ENCODE measurements at regions of chr17 and their contacts with region 1.

Region 1: DNA sequence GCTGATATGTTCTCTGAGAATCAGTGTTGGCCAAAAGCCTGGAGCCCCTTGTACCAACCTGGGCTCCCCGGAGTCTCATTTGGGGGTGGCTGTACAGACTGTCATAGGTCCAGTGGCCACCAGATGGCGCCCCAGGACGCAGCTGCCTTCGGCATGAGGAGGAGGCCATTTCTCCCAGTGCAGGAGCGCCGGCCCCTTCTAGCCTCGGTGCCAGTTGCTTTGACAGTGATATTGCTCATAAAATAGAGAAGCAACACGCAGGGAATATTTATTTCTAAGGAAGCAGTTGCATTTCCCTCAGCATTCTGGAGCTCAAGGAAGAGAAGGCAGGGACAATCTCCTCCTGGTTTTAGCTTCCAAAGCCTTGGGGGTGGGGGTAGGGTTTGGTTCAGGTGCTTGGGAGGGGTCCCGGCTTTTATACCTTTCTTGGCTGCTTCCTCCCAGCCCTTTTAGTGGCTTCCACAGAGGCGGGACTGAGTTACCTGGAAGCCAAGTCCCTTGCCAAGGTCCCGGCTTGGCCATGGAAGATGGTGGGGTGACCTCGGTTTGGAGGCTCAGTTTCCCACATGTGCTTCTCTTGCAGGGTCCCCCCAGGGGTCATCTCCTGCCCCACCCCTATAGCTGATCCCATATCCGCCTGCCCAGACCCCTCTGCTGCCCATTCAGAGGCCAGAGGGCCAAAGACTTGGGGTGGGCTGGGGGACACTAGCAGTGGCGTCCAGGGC is 117.8 kb upstream of the CDC42EP4 start:
- DNase-seq: peak; percentile 63 to 99 (median 86)
- ATAC-seq: peak; percentile 89 to 98 (median 97)
- H3K4me3 ChIP-seq: no peak overlapping the region
- H3K27ac ChIP-seq: no peak overlapping the region
- H3K4me1 ChIP-seq: no peaks in the 10 kb centered on the region
- H3K27me3 ChIP-seq: no peaks in the 10 kb centered on the region
- CTCF ChIP-seq: peak; percentile 86 to 96 (median 91)

Region 2: DNA sequence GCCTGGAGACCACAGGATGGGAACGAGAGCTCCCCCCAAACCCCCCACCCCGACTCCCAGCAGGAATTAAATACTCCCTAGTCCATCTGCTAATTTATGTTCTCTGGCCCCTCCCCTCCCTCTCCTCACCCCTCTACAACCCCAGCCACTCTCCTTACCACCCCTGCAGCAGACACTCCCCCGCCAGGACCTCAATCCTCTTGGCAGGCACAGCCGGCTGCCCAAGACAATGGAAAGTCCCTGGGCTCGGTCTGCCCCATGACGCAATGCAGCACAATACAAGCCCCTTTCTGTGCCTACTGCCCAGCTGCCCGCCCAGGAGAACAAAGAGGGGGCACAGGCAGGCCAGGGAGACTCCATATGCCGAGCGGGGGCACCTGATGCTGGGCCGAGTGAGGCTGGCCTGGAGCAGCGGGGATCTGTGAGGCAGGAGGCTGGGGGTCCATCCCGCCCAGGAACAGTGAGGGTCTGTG is 87.5 kb before region 1 on chr17:
- intact Hi-C with region 1: no loop called
- DNase-seq: peak in 4 of 6 donors; percentile 44 to 65 (median 55)
- ATAC-seq: peak; percentile 51 to 83 (median 78)
- H3K4me3 ChIP-seq: no peak overlapping the region
- H3K27ac ChIP-seq: peak overlapping the region in 2 of 4 donors; percentile 63 to 68
- H3K4me1 ChIP-seq: peaks cover 0 to 3% (median 0%) of the 10 kb centered on the region in 3 donors
- H3K27me3 ChIP-seq: no peaks in the 10 kb centered on the region
- CTCF ChIP-seq: no peak

Region 3: DNA sequence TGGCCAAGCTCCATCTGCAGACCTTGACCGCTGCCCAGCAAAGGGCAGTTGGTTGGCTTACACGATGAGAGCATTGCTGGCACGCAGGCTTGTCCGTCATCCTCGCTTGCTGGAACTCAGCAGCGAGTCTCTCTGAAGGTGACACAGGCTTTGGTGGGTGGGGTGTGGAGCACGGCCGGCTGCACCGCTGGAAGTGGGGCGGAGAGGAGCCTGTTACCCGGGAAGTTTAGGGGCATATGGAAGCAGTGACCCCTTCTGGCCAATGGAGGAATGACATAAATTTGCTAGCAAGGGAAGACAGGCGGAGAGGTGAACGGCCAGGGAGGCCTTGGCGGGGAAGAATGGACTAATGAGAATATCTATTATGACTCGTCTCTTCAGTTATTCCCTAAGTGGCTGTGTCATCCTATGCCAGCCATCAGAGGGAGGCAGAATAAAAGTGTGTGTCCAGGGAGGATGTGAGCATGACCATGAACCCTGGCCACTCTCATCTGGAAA is 280.5 kb after region 1 on chr17:
- intact Hi-C with region 1: loop called in 1 of 3 experiments (anchors 5 kb)
- DNase-seq: peak in 4 of 6 donors; percentile 27 to 60 (median 42)
- ATAC-seq: peak; percentile 69 to 86 (median 80)
- H3K4me3 ChIP-seq: no peak overlapping the region
- H3K27ac ChIP-seq: no peak overlapping the region
- H3K4me1 ChIP-seq: no peaks in the 10 kb centered on the region
- H3K27me3 ChIP-seq: peaks cover 0 to 5% (median 0%) of the 10 kb centered on the region in 4 donors
- CTCF ChIP-seq: peak; percentile 58 to 67 (median 62)

Region 4: GRCh38 chr17:73956669-73957465 is 527.3 kb after region 1 on chr17:
- intact Hi-C with region 1: loop called in 1 of 3 experiments (anchors 5 kb)
- DNase-seq: peak; percentile 58 to 89 (median 78)
- ATAC-seq: peak; percentile 64 to 87 (median 83)
- H3K4me3 ChIP-seq: no peak overlapping the region
- H3K27ac ChIP-seq: no peak overlapping the region
- H3K4me1 ChIP-seq: peaks cover 0 to 2% (median 0%) of the 10 kb centered on the region in 3 donors
- H3K27me3 ChIP-seq: no peaks in the 10 kb centered on the region
- CTCF ChIP-seq: peak; percentile 30 to 55 (median 44)

Region 5: DNA sequence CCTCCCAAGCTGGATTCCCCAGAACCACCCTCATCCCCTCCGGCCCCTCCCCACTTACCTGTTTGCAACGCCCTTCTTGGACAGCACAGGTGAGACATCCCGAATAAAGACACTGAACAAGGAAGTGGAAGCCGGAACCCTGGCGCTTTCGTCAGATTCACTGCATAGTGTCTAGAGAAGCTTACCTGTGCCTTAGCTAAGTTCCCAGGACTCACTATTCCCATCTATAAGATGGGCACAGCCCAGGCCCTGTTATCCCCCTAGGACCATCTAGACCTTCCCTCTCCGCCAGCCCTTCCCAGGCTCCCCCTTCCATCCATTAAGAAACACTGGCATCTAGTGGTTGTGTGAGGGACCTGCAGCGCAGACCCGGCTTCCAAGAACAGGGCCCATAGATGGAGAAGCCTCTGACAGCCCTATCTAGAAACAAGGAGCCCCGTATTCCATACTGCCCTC is 747.0 kb after region 1 on chr17:
- intact Hi-C with region 1: loop called in 2 of 3 experiments (anchors 10 kb)
- DNase-seq: peak in 4 of 6 donors; percentile 16 to 74 (median 56)
- ATAC-seq: peak; percentile 63 to 98 (median 93)
- H3K4me3 ChIP-seq: no peak overlapping the region
- H3K27ac ChIP-seq: no peak overlapping the region
- H3K4me1 ChIP-seq: no peaks in the 10 kb centered on the region
- H3K27me3 ChIP-seq: no peaks in the 10 kb centered on the region
- CTCF ChIP-seq: peak; percentile 59 to 75 (median 68)

Measured in pancreas (tissue), 10 donors.